ENCODE measurements at regions of chr7 and their contacts with region 1.

Region 1: GRCh38 chr7:33062782-33063443 is 337 bp upstream of the NT5C3A start:
- DNase-seq: peak; percentile 94
- H3K4me3 ChIP-seq: peak overlapping the region; percentile 88
- H3K27ac ChIP-seq: peak overlapping the region; percentile 96
- H3K4me1 ChIP-seq: no peaks in the 10 kb centered on the region
- H3K27me3 ChIP-seq: no peaks in the 10 kb centered on the region
- CTCF ChIP-seq: no peak

Region 2: GRCh38 chr7:32957326-32958045 is 105.4 kb before region 1 on chr7 and contains the start of gene FKBP9:
- intact Hi-C with region 1: loop called (anchors 5 kb)
- DNase-seq: peak; percentile 91
- H3K4me3 ChIP-seq: peak within 1 kb of the TSS; percentile 99
- H3K27ac ChIP-seq: peak within 1 kb of the TSS; percentile 99
- H3K4me1 ChIP-seq: no peaks in the 10 kb centered on the region
- H3K27me3 ChIP-seq: no peaks in the 10 kb centered on the region
- CTCF ChIP-seq: no peak
- total RNA-seq, gene FKBP9: 73.2 to 115 TPM

Measured in colonic mucosa (tissue), 4 donors.